ENCODE measurements at regions of chr17 and their contacts with region 1.

Region 1: DNA sequence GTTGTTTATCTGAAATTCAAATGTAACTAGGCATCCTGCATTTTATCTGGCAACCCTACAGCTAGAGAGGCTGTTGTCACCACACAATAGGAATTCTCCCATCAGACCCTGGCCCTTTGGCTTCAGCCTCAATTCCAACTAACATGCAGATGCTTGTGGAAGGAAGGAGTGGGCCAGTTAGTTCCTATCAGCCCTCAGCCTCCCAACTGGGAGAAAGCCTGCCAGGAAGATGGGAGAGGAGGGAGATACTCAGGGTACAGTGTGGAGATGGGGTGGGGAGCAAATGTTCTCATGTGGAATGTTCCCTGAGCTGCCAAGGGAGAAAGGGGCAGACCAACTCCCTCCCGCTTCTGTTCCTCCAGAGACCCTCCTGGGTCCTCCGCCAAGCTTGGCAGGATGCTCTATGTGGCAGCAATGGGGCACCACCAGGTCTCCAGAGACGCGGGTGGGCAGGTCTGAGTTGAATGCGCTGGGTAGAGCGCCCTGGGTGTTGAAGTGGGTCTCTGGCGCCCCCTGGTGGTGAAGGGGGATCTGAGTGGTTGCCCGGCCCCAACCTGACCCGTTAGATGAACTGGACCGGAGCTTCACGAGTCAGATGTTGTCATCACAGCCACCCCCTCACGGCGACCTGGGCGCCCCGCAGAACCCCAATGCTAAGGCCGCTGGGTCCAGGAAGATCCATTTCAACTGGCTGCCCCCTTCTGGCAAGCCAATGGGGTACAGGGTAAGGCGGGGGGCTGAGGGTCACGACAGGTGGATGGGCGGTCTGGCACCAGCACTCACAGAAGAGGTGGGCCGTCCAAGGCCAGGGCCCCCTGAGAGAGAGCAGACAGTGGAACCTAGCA is 15.2 kb downstream of the GALK1 start:
- DNase-seq: peak; percentile 92
- ATAC-seq: peak; percentile 80 to 84
- H3K4me3 ChIP-seq: no peak overlapping the region
- H3K27ac ChIP-seq: no peak overlapping the region
- H3K4me1 ChIP-seq: peaks cover 33% of the 10 kb centered on the region
- H3K27me3 ChIP-seq: no peaks in the 10 kb centered on the region
- CTCF ChIP-seq: peak; percentile 96

Region 2: DNA sequence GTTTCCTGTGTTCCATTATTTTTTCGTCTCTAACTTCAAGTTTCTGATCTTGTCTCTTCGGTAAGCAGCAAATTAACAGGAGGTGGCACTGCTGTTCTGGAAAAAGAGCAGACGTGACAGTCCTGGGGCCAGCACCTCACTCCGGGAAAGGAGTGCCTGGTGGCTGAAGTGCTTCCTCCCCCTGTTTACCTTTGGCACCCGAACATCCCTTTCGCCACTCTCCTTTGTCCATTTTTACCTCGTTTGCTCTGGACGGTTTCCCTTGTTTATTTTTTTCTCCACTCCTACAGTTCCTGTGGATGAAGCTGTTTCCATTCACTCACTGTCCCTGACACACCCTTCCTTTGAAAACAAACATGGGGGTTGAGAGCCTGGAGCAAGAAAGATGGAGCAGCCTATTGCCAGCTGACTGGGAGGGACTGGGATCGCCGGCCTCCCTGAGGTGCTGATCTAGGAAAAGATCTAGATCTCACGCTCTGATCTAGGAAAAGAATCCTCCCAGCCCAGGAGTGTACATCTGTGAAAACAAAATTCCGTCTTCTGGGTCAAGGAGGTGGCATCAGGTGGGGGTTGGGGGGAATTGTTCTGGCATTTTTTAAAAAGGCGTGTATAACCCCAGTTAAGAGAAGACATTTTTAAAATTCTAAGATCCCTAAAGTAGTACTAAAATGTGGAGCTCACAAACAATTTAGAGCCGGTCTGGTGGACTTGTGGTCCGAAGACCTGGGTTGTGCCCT is 69.9 kb before region 1 on chr17:
- intact Hi-C with region 1: loop called (anchors 5 kb)
- DNase-seq: peak; percentile 66
- ATAC-seq: peak; percentile 90 to 92
- H3K4me3 ChIP-seq: no peak overlapping the region
- H3K27ac ChIP-seq: peak overlapping the region; percentile 59
- H3K4me1 ChIP-seq: peaks cover 32% of the 10 kb centered on the region
- H3K27me3 ChIP-seq: no peaks in the 10 kb centered on the region
- CTCF ChIP-seq: peak; percentile 41

Region 3: DNA sequence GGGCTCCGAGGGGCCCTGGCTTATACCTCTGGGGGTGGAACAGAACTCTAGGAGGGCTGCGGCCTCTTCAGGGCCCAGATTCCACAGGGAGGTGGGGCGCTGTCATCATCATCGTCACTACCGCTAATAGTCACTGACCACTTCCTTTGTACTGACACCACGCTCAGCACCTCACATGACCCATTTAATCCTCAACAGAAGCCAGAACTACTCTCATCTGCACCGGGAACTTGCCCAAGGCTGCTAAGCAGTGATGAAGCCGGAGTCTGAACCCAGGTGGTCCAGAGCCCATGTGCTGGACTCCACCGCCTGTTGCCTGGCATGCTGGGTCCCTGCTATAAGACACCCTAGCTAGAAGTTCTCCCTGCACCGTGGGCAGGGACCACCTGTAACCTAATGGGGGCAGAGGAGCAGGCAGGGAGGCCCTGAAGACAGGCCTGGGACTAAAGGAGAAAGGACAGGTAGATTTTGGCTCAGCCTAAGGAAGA is 82.4 kb after region 1 on chr17:
- intact Hi-C with region 1: no loop called
- DNase-seq: peak; percentile 69
- ATAC-seq: peak; percentile 34 to 61
- H3K4me3 ChIP-seq: no peak overlapping the region
- H3K27ac ChIP-seq: peak overlapping the region; percentile 74
- H3K4me1 ChIP-seq: peaks cover 13% of the 10 kb centered on the region
- H3K27me3 ChIP-seq: no peaks in the 10 kb centered on the region
- CTCF ChIP-seq: no peak